ENCODE measurements at regions of chr10 and their contacts with region 1.

Region 1: GRCh38 chr10:80699602-80700039 is 161.9 kb downstream of the SH2D4B start:
- DNase-seq: peak; percentile 73 to 96
- H3K4me3 ChIP-seq: no peak overlapping the region
- H3K27ac ChIP-seq: no peak overlapping the region
- H3K4me1 ChIP-seq: no peaks in the 10 kb centered on the region; a peak in 1 of 7 replicates
- H3K27me3 ChIP-seq: no peaks in the 10 kb centered on the region
- CTCF ChIP-seq: peak; percentile 93 to 96 (median 94)
- EP300 ChIP-seq: no peak
- POLR2A ChIP-seq: no peak
- RAD21 ChIP-seq: peak; percentile 95 to 97

Region 2: GRCh38 chr10:80632742-80633141 is 66.9 kb before region 1 on chr10:
- CTCF ChIA-PET with region 1: no interaction called
- POLR2A ChIA-PET with region 1: no interaction called
- DNase-seq: no peak
- H3K4me3 ChIP-seq: no peak overlapping the region
- H3K27ac ChIP-seq: no peak overlapping the region
- H3K4me1 ChIP-seq: no peaks in the 10 kb centered on the region
- H3K27me3 ChIP-seq: no peaks in the 10 kb centered on the region
- CTCF ChIP-seq: no peak
- EP300 ChIP-seq: no peak
- POLR2A ChIP-seq: no peak
- RAD21 ChIP-seq: no peak

Region 3: DNA sequence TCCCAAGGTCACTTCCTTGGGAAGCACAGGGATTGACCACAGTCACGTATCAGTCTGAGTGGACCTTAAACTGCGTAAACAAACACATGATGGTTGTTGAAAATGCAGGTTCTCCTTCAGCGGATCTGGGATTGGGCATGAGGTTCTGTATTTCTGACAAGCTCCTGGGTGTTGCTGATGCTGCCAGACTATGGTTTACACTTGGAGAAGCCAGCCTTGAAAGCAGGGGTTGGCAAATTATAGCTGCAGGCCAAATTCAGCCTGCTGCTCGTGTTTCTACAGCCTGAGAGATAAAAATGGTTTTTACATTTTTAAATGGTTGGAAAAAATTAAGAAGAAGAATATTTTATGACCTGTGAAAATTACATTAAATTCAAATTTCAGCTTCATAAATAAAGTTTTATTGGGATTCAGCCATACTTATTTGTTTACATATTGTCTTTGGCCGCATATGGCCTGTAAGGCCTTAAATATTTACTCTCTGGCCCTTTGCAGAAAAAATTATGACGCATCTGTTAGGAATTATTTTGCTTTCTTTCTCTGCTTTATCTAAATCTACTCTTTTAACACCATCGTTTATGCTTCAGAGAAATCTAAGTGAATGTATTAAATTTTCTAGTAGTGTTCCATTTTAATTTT is 52.3 kb before region 1 on chr10:
- CTCF ChIA-PET with region 1: no interaction called
- POLR2A ChIA-PET with region 1: no interaction called
- DNase-seq: no peak
- H3K4me3 ChIP-seq: no peak overlapping the region
- H3K27ac ChIP-seq: no peak overlapping the region
- H3K4me1 ChIP-seq: no peaks in the 10 kb centered on the region
- H3K27me3 ChIP-seq: no peaks in the 10 kb centered on the region
- CTCF ChIP-seq: no peak
- EP300 ChIP-seq: no peak
- POLR2A ChIP-seq: no peak
- RAD21 ChIP-seq: no peak

Region 4: DNA sequence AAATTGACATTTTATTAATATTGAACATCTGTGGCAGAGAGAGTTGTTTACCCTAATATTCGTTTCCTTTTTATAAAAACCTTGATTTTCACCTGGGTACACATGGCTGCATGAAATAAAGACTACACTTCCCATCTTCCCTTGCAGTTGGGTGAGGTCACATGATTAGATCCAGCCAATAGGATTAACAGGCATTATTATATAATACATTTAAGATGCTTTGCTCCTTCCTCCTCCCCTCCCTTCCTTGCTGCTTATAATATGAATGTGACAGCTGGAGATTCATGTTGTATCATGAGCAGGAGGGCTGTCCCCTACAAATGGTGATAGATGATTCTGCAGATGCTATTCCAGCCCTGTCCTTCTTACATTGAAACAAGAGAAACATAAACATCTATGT is 15.4 kb before region 1 on chr10:
- CTCF ChIA-PET with region 1: interaction called, 24 read pairs
- POLR2A ChIA-PET with region 1: no interaction called
- DNase-seq: no peak
- H3K4me3 ChIP-seq: no peak overlapping the region
- H3K27ac ChIP-seq: no peak overlapping the region
- H3K4me1 ChIP-seq: no peaks in the 10 kb centered on the region
- H3K27me3 ChIP-seq: no peaks in the 10 kb centered on the region
- CTCF ChIP-seq: no peak
- EP300 ChIP-seq: no peak
- POLR2A ChIP-seq: no peak
- RAD21 ChIP-seq: no peak

Region 5: DNA sequence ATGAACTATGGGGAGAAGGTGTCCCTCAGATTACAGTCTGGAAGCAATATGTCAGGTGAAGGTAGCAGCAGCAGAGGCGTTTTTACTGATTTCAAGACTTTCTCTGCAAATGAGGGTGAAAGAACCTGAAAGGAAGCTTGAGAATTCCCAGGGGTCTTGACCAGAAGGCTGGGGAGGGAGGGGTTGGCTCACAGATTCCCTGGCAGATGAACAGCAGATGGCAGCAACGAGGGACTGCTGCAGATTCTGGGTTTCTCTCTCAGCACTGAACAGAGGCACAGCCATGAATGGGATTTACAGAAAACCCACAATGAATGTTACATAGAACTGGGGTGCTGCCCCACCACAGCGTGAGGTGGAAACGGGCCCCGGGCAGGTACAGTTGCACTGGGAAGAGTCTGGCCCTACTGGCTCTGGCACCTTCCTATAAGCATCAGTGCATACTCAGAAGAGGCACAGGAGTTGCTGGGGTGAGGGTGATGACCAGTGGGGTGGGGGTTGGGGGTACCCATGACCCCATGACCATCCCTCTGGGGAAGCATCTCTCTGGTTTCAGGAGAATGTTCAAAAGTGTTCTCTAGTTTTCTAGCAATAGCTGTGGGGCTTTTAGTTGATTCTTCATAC is 155.8 kb after region 1 on chr10:
- CTCF ChIA-PET with region 1: interaction called, 15 read pairs
- POLR2A ChIA-PET with region 1: no interaction called
- DNase-seq: peak; percentile 53 to 77
- H3K4me3 ChIP-seq: no peak overlapping the region
- H3K27ac ChIP-seq: no peak overlapping the region
- H3K4me1 ChIP-seq: no peaks in the 10 kb centered on the region; a peak in 3 of 7 replicates
- H3K27me3 ChIP-seq: no peaks in the 10 kb centered on the region
- CTCF ChIP-seq: peak; percentile 78 to 83 (median 78)
- EP300 ChIP-seq: no peak
- POLR2A ChIP-seq: no peak
- RAD21 ChIP-seq: peak; percentile 74 to 80

Region 6: DNA sequence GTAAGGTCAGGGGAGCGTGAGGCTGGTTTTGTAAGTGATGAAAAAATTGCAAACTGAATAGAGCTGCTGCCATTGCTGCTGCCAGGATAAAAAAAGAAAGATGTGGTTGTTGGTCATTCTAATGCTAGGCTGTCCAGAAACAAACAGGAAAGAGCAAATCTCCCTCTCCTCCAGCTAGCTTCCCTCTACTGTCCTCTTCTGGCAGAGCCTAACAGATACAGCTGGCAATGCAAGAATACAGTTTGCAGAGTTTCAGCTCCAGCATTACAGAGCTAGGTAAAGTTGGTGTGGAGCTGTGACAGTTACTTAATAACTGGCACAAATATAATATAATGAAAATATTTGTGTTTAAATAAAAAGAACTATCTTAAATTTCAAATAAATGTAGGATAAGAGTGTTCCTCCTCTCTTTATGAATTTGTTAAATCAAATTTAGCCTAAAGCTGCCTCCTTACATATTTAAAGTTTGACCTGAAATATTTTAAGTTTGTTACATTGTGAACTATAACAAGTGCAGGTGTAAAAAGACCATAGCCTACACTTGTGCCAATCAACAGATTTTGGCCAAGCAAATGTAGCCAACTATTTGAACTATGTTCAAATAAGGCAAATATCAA is 245.8 kb after region 1 on chr10:
- CTCF ChIA-PET with region 1: interaction called, 63 read pairs
- POLR2A ChIA-PET with region 1: no interaction called
- DNase-seq: peak in 1 of 2 experiments; percentile 10
- H3K4me3 ChIP-seq: no peak overlapping the region
- H3K27ac ChIP-seq: no peak overlapping the region
- H3K4me1 ChIP-seq: peaks cover 0 to 5% (median 0%) of the 10 kb centered on the region in 4 experiments; a peak in 1 of 7 replicates
- H3K27me3 ChIP-seq: no peaks in the 10 kb centered on the region
- CTCF ChIP-seq: peak in 2 of 3 experiments; percentile 96 to 97; a peak in 3 of 4 replicates
- EP300 ChIP-seq: no peak
- POLR2A ChIP-seq: no peak
- RAD21 ChIP-seq: peak; percentile 95 to 98

Region 7: GRCh38 chr10:81018708-81019365 is 319.2 kb after region 1 on chr10:
- CTCF ChIA-PET with region 1: interaction called, 42 read pairs
- POLR2A ChIA-PET with region 1: no interaction called
- DNase-seq: no peak
- H3K4me3 ChIP-seq: no peak overlapping the region
- H3K27ac ChIP-seq: no peak overlapping the region
- H3K4me1 ChIP-seq: no peaks in the 10 kb centered on the region
- H3K27me3 ChIP-seq: no peaks in the 10 kb centered on the region
- CTCF ChIP-seq: peak; percentile 49 to 91 (median 77)
- EP300 ChIP-seq: no peak
- POLR2A ChIP-seq: no peak
- RAD21 ChIP-seq: peak; percentile 79 to 82